Natural killer cell (primary cell): ENCODE measurements at regions of chr19 and their contacts with region 1.

Region 1: GRCh38 chr19:44093931-44094765 is at the start of gene ZNF224:
- DNase-seq: peak; percentile 67 to 90
- ATAC-seq: peak; percentile 89 to 92 (median 92)
- H3K4me3 ChIP-seq: peak within 1 kb of the TSS; percentile 98
- H3K4me3 Mint-ChIP-seq: peak within 1 kb of the TSS; percentile 98
- H3K27ac ChIP-seq: peak within 1 kb of the TSS; percentile 74
- H3K27ac Mint-ChIP-seq: peak within 1 kb of the TSS; percentile 91 to 93
- H3K4me1 ChIP-seq: peaks cover 14% of the 10 kb centered on the region
- H3K4me1 Mint-ChIP-seq: peaks cover 28 to 39% of the 10 kb centered on the region in 2 donors
- H3K27me3 ChIP-seq: no peaks in the 10 kb centered on the region
- H3K27me3 Mint-ChIP-seq: no peaks in the 10 kb centered on the region
- CTCF ChIP-seq: no peak
- total RNA-seq, gene ZNF224: 52.2 to 57.6 (median 56.0) TPM

Region 2: DNA sequence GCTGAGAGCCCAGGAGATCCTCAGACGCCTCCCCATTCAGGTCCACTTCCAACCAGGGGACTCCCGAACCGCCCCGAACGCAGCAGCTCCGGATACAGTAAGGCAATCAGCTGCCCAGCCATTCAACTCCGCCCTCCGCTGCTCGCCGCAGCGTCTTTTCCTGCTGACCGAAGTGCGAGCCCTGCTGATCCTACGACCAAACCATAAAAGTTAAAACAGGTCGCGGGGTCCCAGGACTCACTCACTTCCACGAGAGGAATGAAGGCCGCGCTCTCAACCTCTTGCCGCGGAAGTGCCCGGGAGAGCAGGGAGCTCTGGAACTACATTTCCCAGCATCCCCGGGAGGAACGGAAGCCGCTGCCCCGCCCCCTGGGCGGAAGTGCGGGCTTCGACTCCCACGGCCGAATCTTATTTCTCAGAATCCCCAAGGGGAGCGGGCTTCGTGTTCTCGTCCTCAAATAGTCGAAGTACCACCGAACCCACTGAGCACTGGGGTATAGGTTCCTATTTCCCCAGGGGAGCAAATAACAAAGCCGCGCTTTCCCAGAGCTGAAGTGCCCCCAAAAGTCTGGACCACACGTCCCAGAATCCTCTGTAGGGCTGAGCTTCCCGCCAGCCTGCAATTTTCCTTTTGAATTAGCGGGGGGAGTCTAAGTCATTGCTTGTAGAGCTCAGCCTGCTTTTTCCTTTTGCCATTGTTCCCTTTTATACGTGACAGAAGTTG is 159.0 kb before region 1 on chr19 and contains the start of gene ZNF45:
- intact Hi-C with region 1: loop called (anchors 2 kb)
- DNase-seq: peak; percentile 77 to 94
- ATAC-seq: peak; percentile 96 to 98 (median 98)
- H3K4me3 ChIP-seq: peak within 1 kb of the TSS; percentile 60
- H3K4me3 Mint-ChIP-seq: peak within 1 kb of the TSS; percentile 92
- H3K27ac ChIP-seq: peak within 1 kb of the TSS; percentile 58
- H3K27ac Mint-ChIP-seq: peak within 1 kb of the TSS; percentile 82 to 89
- H3K4me1 ChIP-seq: peaks cover 11% of the 10 kb centered on the region
- H3K4me1 Mint-ChIP-seq: peaks cover 18 to 21% of the 10 kb centered on the region in 2 donors
- H3K27me3 ChIP-seq: peaks cover 3% of the 10 kb centered on the region
- H3K27me3 Mint-ChIP-seq: peaks cover 15 to 16% of the 10 kb centered on the region in 2 donors
- CTCF ChIP-seq: no peak
- total RNA-seq, gene ZNF45: 10.6 to 24.3 (median 14.5) TPM

Region 3: DNA sequence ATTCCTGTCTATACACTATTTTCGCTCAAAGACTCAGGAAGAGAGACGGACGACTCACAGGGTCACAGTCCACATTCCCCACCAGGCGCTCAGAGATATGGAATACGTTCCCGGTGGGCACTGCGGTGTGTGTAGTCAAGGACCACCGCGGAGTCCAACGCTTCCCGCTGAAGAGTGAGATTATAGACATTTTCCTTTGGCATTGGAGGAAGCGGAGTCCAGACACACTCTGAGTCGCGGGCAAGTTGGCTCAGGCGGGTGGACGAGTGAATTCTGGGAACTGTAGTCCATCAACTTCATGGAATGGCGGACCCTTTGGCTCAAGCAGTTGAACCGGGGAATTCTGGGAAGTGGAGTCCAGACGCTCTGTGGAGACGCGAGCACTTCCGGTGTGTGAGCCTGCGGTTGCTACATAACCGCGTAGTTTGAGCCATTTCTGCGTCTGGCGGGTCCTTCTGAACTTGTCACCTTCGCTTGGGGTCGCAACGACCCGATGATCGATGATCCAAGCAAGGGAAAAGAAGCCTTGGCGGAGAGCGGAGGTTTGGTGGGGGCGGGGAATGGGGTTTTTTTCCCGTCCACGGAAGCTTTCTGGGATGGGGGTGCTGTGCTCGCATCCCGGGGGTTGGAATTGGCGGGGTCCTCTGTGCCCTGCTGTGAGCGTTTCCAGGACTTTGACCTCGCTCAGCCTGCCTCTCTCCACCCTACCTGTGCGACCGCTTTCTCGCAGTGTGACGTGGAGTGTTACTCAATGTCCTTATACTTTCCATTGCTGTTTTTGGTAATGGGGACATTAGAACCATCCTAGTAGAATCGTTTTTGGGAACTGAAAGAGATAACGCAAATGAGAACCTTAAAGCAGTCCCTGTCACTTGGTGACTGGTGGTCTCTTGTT is 91.3 kb before region 1 on chr19 and contains the start of gene ZNF230:
- intact Hi-C with region 1: loop called (anchors 2 kb)
- DNase-seq: peak; percentile 70 to 95
- ATAC-seq: peak; percentile 94 to 99 (median 98)
- H3K4me3 ChIP-seq: peak within 1 kb of the TSS; percentile 70
- H3K4me3 Mint-ChIP-seq: peak within 1 kb of the TSS; percentile 97
- H3K27ac ChIP-seq: peak within 1 kb of the TSS; percentile 73
- H3K27ac Mint-ChIP-seq: peak within 1 kb of the TSS; percentile 87 to 93
- H3K4me1 ChIP-seq: peaks cover 16% of the 10 kb centered on the region
- H3K4me1 Mint-ChIP-seq: peaks cover 32 to 34% of the 10 kb centered on the region in 2 donors
- H3K27me3 ChIP-seq: no peaks in the 10 kb centered on the region
- H3K27me3 Mint-ChIP-seq: peaks cover 0 to 3% of the 10 kb centered on the region in 2 donors
- CTCF ChIP-seq: no peak
- total RNA-seq, gene ZNF230: 2.3 to 6.3 (median 3.4) TPM

Region 4: DNA sequence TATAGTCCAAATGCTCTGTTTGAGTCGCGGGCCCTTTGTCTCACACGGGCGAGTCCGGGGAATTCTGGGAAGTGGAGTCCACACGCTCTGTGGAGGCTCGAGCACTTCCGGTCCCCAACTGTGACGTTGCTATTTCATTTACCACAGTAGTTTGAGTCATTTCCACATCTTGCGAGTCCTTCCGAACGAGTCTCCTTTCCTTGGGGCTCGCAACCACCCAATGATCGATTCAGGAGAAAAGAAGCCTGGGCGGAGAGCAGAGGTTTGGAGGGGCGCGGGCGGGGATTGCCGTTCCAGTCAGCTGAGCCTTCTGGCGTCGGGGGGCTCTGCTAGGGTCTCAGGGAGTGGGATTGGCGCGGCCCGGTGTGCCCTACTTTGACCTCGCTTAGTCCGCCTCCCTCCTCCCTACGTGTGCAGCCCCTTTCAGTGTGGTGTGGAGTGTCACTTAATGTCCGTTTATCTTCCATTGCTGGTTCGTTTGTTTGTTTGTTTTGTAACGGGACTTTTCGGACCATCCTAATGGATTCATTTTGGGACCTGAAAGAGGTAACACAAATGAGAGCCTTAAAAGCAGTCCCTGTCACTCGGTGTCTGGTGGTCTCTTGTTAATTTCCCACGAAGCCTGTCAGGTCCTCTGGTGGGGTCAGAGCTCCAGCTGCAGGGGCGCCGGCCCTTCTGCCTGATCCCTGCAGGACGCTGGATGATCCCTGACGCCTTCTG is 68.8 kb before region 1 on chr19 and contains the start of gene ZNF222:
- intact Hi-C with region 1: loop called (anchors 2 kb)
- DNase-seq: peak; percentile 62 to 88
- ATAC-seq: peak; percentile 95 to 100 (median 99)
- H3K4me3 ChIP-seq: peak within 1 kb of the TSS; percentile 68
- H3K4me3 Mint-ChIP-seq: peak within 1 kb of the TSS; percentile 99
- H3K27ac ChIP-seq: peak within 1 kb of the TSS; percentile 32
- H3K27ac Mint-ChIP-seq: peak within 1 kb of the TSS; percentile 88 to 98
- H3K4me1 ChIP-seq: peaks cover 13% of the 10 kb centered on the region
- H3K4me1 Mint-ChIP-seq: peaks cover 24 to 28% of the 10 kb centered on the region in 2 donors
- H3K27me3 ChIP-seq: peaks cover 2% of the 10 kb centered on the region
- H3K27me3 Mint-ChIP-seq: peaks cover 15 to 28% of the 10 kb centered on the region in 2 donors
- CTCF ChIP-seq: no peak
- total RNA-seq, gene ZNF222: 5.6 to 7.6 (median 5.7) TPM

Region 5: GRCh38 chr19:44055870-44056269 is 38.3 kb before region 1 on chr19:
- intact Hi-C with region 1: no loop called
- DNase-seq: no peak
- ATAC-seq: no peak
- H3K4me3 ChIP-seq: no peak overlapping the region
- H3K4me3 Mint-ChIP-seq: no peak overlapping the region
- H3K27ac ChIP-seq: no peak overlapping the region
- H3K27ac Mint-ChIP-seq: no peak overlapping the region
- H3K4me1 ChIP-seq: peaks cover 9% of the 10 kb centered on the region
- H3K4me1 Mint-ChIP-seq: peaks cover 19 to 22% of the 10 kb centered on the region in 2 donors
- H3K27me3 ChIP-seq: no peaks in the 10 kb centered on the region
- H3K27me3 Mint-ChIP-seq: no peaks in the 10 kb centered on the region
- CTCF ChIP-seq: no peak

Region 6: GRCh38 chr19:44071824-44072542 is 22.2 kb before region 1 on chr19 and contains the start of gene ZNF284:
- intact Hi-C with region 1: loop called (anchors 1 kb)
- DNase-seq: peak; percentile 66 to 92
- ATAC-seq: peak; percentile 95 to 99 (median 99)
- H3K4me3 ChIP-seq: peak within 1 kb of the TSS; percentile 43
- H3K4me3 Mint-ChIP-seq: peak within 1 kb of the TSS; percentile 96
- H3K27ac ChIP-seq: peak within 1 kb of the TSS; percentile 21
- H3K27ac Mint-ChIP-seq: peak within 1 kb of the TSS; percentile 90
- H3K4me1 ChIP-seq: peaks cover 18% of the 10 kb centered on the region
- H3K4me1 Mint-ChIP-seq: peaks cover 22 to 24% of the 10 kb centered on the region in 2 donors
- H3K27me3 ChIP-seq: no peaks in the 10 kb centered on the region
- H3K27me3 Mint-ChIP-seq: no peaks in the 10 kb centered on the region
- CTCF ChIP-seq: no peak
- total RNA-seq, gene ZNF284: 3.2 to 4.6 (median 3.8) TPM

Region 7: GRCh38 chr19:44207126-44207803 is 113.1 kb after region 1 on chr19:
- intact Hi-C with region 1: no loop called
- DNase-seq: peak; percentile 28 to 90
- ATAC-seq: peak; percentile 77 to 95 (median 84)
- H3K4me3 ChIP-seq: peak overlapping the region; percentile 77
- H3K4me3 Mint-ChIP-seq: peak overlapping the region; percentile 96
- H3K27ac ChIP-seq: peak overlapping the region; percentile 79
- H3K27ac Mint-ChIP-seq: peak overlapping the region; percentile 91 to 96
- H3K4me1 ChIP-seq: peaks cover 12% of the 10 kb centered on the region
- H3K4me1 Mint-ChIP-seq: peaks cover 11 to 13% of the 10 kb centered on the region in 2 donors
- H3K27me3 ChIP-seq: peaks cover 2% of the 10 kb centered on the region
- H3K27me3 Mint-ChIP-seq: peaks cover 15 to 22% of the 10 kb centered on the region in 2 donors
- CTCF ChIP-seq: no peak